CD8-positive, alpha-beta memory T cell (primary cell): ENCODE measurements at regions of chr5 and their contacts with region 1.

Region 1: GRCh38 chr5:179763215-179763945 is 30.4 kb upstream of the LTC4S start:
- DNase-seq: peak; percentile 23 to 67 (median 41)
- H3K4me3 ChIP-seq: no peak overlapping the region
- H3K4me3 Mint-ChIP-seq: no peak overlapping the region
- H3K27ac ChIP-seq: no peak overlapping the region
- H3K27ac Mint-ChIP-seq: peak overlapping the region in 7 of 8 donors; percentile 6 to 83 (median 52)
- H3K4me1 ChIP-seq: peaks cover 30% of the 10 kb centered on the region
- H3K4me1 Mint-ChIP-seq: peaks cover 38 to 70% (median 49%) of the 10 kb centered on the region in 3 donors
- H3K27me3 ChIP-seq: no peaks in the 10 kb centered on the region
- H3K27me3 Mint-ChIP-seq: no peaks in the 10 kb centered on the region

Region 2: GRCh38 chr5:179678223-179679013 is 85.0 kb before region 1 on chr5:
- CTCF ChIA-PET with region 1: interaction called, 10 read pairs
- POLR2A ChIA-PET with region 1: interaction called, 5 read pairs
- DNase-seq: peak; percentile 89 to 94 (median 93)
- H3K4me3 ChIP-seq: peak overlapping the region; percentile 97
- H3K4me3 Mint-ChIP-seq: peak overlapping the region; percentile 88 to 99 (median 96)
- H3K27ac ChIP-seq: peak overlapping the region; percentile 91
- H3K27ac Mint-ChIP-seq: peak overlapping the region; percentile 87 to 98 (median 97)
- H3K4me1 ChIP-seq: peaks cover 14% of the 10 kb centered on the region
- H3K4me1 Mint-ChIP-seq: peaks cover 25 to 41% (median 27%) of the 10 kb centered on the region in 3 donors
- H3K27me3 ChIP-seq: no peaks in the 10 kb centered on the region
- H3K27me3 Mint-ChIP-seq: no peaks in the 10 kb centered on the region

Region 3: GRCh38 chr5:179780362-179780761 is 17.0 kb after region 1 on chr5:
- CTCF ChIA-PET with region 1: interaction called, 14 read pairs
- POLR2A ChIA-PET with region 1: no interaction called
- DNase-seq: no peak
- H3K4me3 ChIP-seq: no peak overlapping the region
- H3K4me3 Mint-ChIP-seq: no peak overlapping the region
- H3K27ac ChIP-seq: no peak overlapping the region
- H3K27ac Mint-ChIP-seq: no peak overlapping the region
- H3K4me1 ChIP-seq: no peaks in the 10 kb centered on the region
- H3K4me1 Mint-ChIP-seq: no peaks in the 10 kb centered on the region
- H3K27me3 ChIP-seq: no peaks in the 10 kb centered on the region
- H3K27me3 Mint-ChIP-seq: peaks cover 0 to 1% of the 10 kb centered on the region in 2 donors

Region 4: GRCh38 chr5:179795863-179796833 is 32.8 kb after region 1 on chr5:
- CTCF ChIA-PET with region 1: interaction called, 61 read pairs
- POLR2A ChIA-PET with region 1: interaction called, 7 read pairs
- DNase-seq: peak; percentile 56 to 73 (median 63)
- H3K4me3 ChIP-seq: peak overlapping the region; percentile 47
- H3K4me3 Mint-ChIP-seq: peak overlapping the region; percentile 50 to 82 (median 67)
- H3K27ac ChIP-seq: no peak overlapping the region
- H3K27ac Mint-ChIP-seq: peak overlapping the region in 6 of 8 donors; percentile 50 to 96 (median 67)
- H3K4me1 ChIP-seq: peaks cover 28% of the 10 kb centered on the region
- H3K4me1 Mint-ChIP-seq: peaks cover 27 to 39% (median 28%) of the 10 kb centered on the region in 3 donors
- H3K27me3 ChIP-seq: no peaks in the 10 kb centered on the region
- H3K27me3 Mint-ChIP-seq: no peaks in the 10 kb centered on the region

Region 5: GRCh38 chr5:180090098-180090768 is 326.9 kb after region 1 on chr5:
- CTCF ChIA-PET with region 1: interaction called, 10 read pairs
- POLR2A ChIA-PET with region 1: no interaction called
- DNase-seq: peak; percentile 72 to 84 (median 79)
- H3K4me3 ChIP-seq: peak overlapping the region; percentile 67
- H3K4me3 Mint-ChIP-seq: peak overlapping the region; percentile 66 to 92 (median 86)
- H3K27ac ChIP-seq: no peak overlapping the region
- H3K27ac Mint-ChIP-seq: peak overlapping the region in 7 of 8 donors; percentile 19 to 96 (median 78)
- H3K4me1 ChIP-seq: peaks cover 6% of the 10 kb centered on the region
- H3K4me1 Mint-ChIP-seq: peaks cover 12 to 26% (median 21%) of the 10 kb centered on the region in 3 donors
- H3K27me3 ChIP-seq: no peaks in the 10 kb centered on the region
- H3K27me3 Mint-ChIP-seq: peaks cover 4% of the 10 kb centered on the region in 2 donors